Head of caudate nucleus (tissue), 42 donors: ENCODE measurements at regions of chr1 and their contacts with region 1.

Region 1: DNA sequence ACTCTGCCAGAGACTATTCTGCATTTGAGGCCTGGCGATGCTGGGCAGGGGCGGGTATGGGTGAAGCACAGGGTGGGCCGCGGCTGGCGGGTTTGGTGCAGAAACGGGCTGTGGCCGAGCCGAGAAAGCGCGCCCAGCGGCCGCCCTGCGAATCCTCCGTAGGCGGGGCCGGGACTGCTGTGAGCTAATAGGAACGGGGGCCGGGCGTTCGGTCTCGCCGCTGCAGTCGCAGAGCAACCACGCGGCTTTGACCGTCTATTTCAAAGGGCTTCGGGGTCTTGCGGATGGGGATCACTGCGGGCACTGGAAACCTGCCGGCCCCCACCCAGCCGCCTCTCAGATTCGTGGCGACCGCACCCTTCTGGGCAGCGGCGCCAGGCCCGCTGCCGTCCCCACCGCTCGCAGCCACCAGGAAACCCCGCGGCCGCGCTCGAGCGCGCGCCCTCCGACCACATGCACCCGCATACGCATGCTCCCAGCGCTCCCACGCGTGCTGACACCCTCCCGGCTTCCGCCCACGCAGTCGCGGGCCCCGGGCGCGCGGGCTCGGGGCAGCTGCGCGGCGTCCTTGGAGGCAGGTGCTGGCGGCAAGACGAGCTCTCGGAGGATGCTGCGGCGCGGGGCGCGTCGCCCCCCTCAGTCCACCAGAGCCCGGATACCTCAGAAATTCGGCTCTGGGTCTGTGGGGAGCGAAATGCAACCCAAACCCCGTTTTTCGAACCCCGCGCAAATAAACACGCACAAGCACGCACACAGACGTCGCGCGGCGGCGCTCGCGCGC is 32.6 kb downstream of the DNTTIP2 start:
- DNase-seq: peak; percentile 77 to 95 (median 89)

Region 2: DNA sequence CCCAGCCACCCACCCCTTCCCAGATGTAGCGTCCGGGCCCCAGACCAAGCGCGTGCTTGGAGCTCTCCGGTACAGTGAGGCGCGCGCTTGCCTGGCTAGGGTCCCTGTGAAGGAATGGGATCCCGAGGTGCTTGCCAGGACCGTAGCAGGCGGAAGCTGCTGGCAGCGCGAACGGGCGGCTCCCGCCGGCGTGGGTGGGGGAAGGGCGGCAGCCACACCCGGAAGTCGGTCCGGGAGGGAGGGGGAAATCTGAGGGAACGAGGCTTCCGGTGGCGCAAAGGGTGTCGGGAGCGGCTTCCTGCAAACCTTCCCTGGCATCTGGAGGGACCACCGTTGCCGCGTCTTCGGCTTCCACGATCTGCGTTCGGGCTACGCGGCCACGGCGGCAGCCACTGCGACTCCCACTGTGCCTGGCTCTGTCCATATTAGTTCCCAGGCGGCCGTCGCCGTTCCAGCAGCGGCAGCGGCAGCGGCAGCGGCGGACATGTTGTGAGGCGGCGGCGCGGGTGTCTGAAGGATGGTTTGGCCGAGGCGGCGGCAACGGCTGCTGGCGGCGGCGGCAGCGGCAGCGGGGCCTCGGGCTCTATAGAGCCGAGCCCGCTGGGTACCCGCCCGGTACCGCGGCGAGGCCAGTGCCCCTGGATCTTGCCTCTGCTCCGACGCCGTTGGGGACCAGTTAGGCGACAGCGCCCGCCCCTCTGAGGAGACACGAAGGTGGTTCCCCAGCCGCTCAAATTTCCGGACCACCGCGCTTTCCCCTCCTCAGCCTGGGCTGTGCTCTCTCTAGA is 500.6 kb before region 1 on chr1 and contains the start of gene DR1:
- intact Hi-C with region 1: loop called (anchors 2 kb)
- DNase-seq: peak; percentile 81 to 98 (median 95)

Region 3: GRCh38 chr1:93447516-93448291 is 398.7 kb before region 1 on chr1 and contains the start of gene FNBP1L:
- intact Hi-C with region 1: loop called (anchors 10 kb)
- DNase-seq: peak; percentile 34 to 86 (median 76)

Region 4: DNA sequence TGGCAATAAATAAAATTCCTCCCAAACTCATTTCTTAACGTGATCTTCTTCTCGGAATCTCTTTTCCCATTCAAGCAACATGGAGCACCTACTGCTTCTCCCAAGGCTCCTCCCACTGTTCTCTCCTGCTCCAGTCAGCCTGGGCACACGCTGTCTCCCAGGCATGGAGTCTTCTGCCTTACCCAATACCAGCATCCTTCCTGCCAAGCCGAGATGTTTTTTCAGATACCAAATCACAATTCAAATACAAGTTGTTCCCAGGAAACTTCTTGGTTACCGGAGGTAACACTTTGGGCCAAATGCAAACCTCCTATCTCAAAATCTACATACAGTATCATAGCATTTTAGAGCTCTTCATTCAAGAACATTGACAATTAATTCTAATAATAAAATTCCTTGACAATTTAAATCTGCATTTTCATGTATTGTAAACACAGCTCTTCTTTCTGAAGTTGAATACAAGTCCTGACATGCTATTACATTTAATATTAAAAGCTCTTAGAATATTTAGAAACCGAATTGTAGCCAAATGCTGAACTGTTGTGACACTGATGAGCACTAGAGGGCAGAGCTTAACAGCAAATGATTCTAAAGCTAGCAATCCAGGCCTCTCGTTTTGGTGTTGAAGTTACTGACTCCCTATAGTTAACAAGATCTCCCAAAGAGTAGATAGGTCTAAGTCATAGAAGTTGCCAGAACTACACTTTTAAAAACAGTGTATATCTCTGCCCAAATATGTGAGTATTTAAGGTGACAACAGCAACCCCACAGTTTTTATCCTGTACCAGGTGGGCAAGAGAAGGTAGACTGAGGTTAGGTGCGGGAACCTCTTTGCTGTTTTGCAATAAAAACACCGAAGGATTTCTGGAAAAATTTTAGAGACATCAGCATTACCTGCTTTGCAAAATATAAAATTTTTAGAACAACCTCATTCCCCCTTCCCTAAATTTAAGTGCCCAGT is 217.0 kb before region 1 on chr1:
- intact Hi-C with region 1: loop called (anchors 2 kb)
- DNase-seq: peak in 24 of 42 donors; percentile 24 to 81 (median 58)